GM12878 (cell line): ENCODE measurements at regions of chr12 and their contacts with region 1.

Region 1: GRCh38 chr12:87320724-87321123 is 708.5 kb downstream of the C12orf50 start:
- DNase-seq: no peak
- ATAC-seq: no peak
- H3K4me3 ChIP-seq: no peak overlapping the region
- H3K27ac ChIP-seq: no peak overlapping the region
- H3K4me1 ChIP-seq: no peaks in the 10 kb centered on the region
- H3K27me3 ChIP-seq: no peaks in the 10 kb centered on the region
- CTCF ChIP-seq: no peak
- EP300 ChIP-seq: no peak
- POLR2A ChIP-seq: no peak
- RAD21 ChIP-seq: no peak

Region 2: GRCh38 chr12:87290505-87290904 is 30.2 kb before region 1 on chr12:
- CTCF ChIA-PET with region 1: no interaction called
- POLR2A ChIA-PET with region 1: no interaction called
- RAD21 ChIA-PET with region 1: no interaction called
- SMC1A ChIA-PET with region 1: no interaction called
- in situ Hi-C with region 1: no loop called
- intact Hi-C with region 1: loop called (anchors 2 kb)
- DNase-seq: no peak
- ATAC-seq: no peak
- H3K4me3 ChIP-seq: no peak overlapping the region
- H3K27ac ChIP-seq: no peak overlapping the region
- H3K4me1 ChIP-seq: no peaks in the 10 kb centered on the region
- H3K27me3 ChIP-seq: no peaks in the 10 kb centered on the region
- CTCF ChIP-seq: no peak
- EP300 ChIP-seq: no peak
- POLR2A ChIP-seq: no peak
- RAD21 ChIP-seq: no peak